Activated B cell treated with CpG ODN at 0.5 μM for 24 hours (primary cell): ENCODE measurements at regions of chr10 and their contacts with region 1.

Region 1: GRCh38 chr10:87817609-87818504 is at the start of gene ATAD1:
- DNase-seq: peak; percentile 85
- ATAC-seq: peak; percentile 84
- H3K4me3 Mint-ChIP-seq: peak within 1 kb of the TSS; percentile 98
- H3K27ac Mint-ChIP-seq: peak within 1 kb of the TSS; percentile 96
- H3K4me1 Mint-ChIP-seq: peaks cover 40% of the 10 kb centered on the region
- H3K27me3 Mint-ChIP-seq: no peaks in the 10 kb centered on the region
- CTCF ChIP-seq: no peak
- total RNA-seq, gene ATAD1: 34.7 and 42.6 TPM in 2 replicates

Region 2: GRCh38 chr10:86971232-86971991 is 846.4 kb before region 1 on chr10:
- CTCF ChIA-PET with region 1: no interaction called
- POLR2A ChIA-PET with region 1: no interaction called
- intact Hi-C with region 1: loop called (anchors 2 kb)
- DNase-seq: peak; percentile 91
- ATAC-seq: peak; percentile 88
- H3K4me3 Mint-ChIP-seq: peak overlapping the region; percentile 87
- H3K27ac Mint-ChIP-seq: peak overlapping the region; percentile 86
- H3K4me1 Mint-ChIP-seq: peaks cover 26% of the 10 kb centered on the region
- H3K27me3 Mint-ChIP-seq: peaks cover 4% of the 10 kb centered on the region
- CTCF ChIP-seq: no peak

Region 3: DNA sequence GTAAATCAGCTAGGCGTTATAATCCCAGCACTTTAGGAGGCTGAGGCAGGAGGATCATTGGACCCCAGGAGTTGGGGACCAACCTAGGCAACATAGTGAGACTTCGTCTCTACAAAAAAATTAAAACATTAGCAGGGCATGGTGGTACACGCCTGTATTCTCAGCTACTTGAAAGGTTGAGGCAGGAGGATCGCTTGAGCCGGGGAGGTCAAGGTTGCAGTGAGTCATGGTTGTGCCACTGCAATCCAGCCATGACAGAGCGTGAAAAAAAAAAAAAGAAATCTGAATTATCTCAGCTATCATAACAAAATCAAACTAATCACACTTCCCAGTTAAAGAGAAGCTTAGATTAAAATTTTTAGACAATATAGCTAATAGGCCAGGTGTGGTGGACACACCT is 35.1 kb before region 1 on chr10:
- CTCF ChIA-PET with region 1: no interaction called
- POLR2A ChIA-PET with region 1: no interaction called
- intact Hi-C with region 1: loop called (anchors 2 kb)
- DNase-seq: no peak
- ATAC-seq: no peak
- H3K4me3 Mint-ChIP-seq: no peak overlapping the region
- H3K27ac Mint-ChIP-seq: no peak overlapping the region
- H3K4me1 Mint-ChIP-seq: no peaks in the 10 kb centered on the region
- H3K27me3 Mint-ChIP-seq: no peaks in the 10 kb centered on the region
- CTCF ChIP-seq: no peak

Region 4: DNA sequence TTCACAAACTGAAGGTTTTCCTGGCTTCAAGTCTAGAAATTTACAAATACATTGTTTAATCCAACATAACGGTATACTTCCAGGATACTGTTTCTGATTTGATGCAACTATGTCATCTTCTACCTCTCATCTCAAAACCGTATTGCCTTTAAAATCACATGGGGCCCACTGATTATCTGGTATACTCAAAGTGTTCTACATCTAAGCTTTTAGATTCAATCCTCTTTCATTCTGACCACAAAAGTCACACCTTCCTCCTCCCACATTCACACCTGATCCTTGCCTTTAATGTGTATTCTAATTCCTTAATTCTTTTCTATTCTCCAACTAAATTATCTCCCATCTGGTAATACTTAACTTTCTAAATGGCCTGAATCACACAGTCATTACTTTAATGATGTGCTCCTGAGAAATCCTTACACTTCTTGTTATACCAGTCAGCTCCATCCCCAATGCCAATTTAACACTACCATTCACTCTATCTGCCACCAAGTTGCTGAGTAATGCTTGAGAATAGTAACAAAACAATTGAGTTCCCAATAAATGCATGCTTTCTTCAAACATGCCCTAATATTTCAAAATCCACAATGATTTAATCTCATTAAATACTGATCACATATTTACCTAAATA is 12.8 kb before region 1 on chr10:
- CTCF ChIA-PET with region 1: no interaction called
- POLR2A ChIA-PET with region 1: interaction called, 3 read pairs
- intact Hi-C with region 1: loop called (anchors 2 kb)
- DNase-seq: no peak
- ATAC-seq: no peak
- H3K4me3 Mint-ChIP-seq: no peak overlapping the region
- H3K27ac Mint-ChIP-seq: no peak overlapping the region
- H3K4me1 Mint-ChIP-seq: peaks cover 10% of the 10 kb centered on the region
- H3K27me3 Mint-ChIP-seq: no peaks in the 10 kb centered on the region
- CTCF ChIP-seq: no peak

Region 5: DNA sequence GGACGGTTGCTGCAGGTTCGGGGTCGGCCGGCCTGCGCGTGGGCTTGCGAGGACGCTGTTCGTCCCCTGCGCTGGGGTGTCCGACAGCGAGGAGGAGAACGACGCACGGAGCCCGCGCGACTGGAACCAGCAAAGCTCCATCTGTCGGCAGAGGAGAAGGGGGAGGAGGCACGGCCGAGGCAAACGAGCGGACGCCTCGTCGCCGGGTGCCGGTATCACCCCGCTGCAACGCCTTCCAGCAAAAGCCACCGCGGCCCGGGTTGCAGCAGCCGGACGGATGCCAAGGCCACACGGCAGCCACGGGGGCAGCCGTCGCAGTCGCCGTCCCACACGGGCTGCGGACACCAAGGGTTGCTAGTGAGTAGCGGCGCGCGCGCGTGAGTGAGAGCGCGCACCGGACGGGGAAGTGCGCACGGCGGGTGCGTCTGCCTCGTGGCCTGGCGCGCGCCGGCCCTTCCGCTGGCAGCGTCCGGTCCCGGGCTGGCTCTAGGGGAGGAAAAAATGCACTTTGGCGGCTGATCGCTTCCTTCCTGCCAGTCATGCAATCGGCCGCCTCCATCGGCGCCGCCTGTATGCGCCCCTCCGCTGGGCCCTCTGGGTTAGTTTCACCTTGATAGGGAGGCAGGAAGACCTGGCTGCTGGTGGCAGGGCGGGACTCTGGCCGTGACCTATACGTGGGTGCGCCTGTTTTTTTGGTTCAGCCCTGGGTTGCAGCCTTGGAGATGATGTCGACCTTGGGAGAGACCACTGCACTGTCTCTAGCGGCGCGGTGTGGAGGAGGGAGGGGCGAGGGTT is 1062.6 kb after region 1 on chr10:
- CTCF ChIA-PET with region 1: no interaction called
- POLR2A ChIA-PET with region 1: no interaction called
- intact Hi-C with region 1: loop called (anchors 1 kb)
- DNase-seq: peak; percentile 77
- ATAC-seq: peak; percentile 71
- H3K4me3 Mint-ChIP-seq: peak overlapping the region; percentile 96
- H3K27ac Mint-ChIP-seq: peak overlapping the region; percentile 99
- H3K4me1 Mint-ChIP-seq: peaks cover 52% of the 10 kb centered on the region
- H3K27me3 Mint-ChIP-seq: no peaks in the 10 kb centered on the region
- CTCF ChIP-seq: no peak